ENCODE measurements at regions of chr5 and their contacts with region 1.

Region 1: DNA sequence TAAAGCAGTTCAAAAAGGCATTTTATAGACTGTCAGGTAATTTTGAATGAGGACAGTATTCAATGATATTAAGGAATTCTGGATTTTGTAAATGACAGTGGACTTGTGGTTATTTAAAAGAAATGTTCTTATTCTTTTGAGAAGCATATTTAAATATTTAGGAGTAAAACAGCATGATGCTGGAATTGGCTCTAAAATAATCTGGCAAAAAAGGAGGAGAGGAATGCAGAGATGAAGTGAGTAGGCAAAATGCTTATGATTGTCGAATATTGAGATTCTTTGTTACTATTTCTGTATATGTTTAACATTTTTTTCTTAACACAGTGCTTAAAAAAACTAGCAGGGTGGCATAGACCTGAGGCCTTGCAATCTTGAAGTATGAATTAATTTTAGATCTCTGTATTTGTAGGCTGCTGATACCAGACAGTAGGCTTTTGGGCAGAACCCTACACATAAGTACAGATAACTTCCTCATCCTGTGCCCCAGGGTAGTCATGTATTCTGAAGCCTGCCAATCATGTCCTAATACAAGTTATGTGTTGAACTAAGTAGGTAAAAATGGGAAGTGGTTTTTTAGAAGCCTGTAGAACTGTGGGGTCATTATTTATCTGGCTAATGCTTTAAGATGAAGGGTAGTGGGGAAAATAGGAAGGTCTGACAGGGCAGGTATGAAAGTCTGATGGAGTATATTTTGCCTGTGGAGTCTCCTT is 9.4 kb downstream of the CD180 start:
- DNase-seq: no peak
- H3K4me3 Mint-ChIP-seq: no peak overlapping the region
- H3K27ac Mint-ChIP-seq: peak overlapping the region; percentile 10
- H3K4me1 Mint-ChIP-seq: peaks cover 39% of the 10 kb centered on the region
- H3K27me3 Mint-ChIP-seq: no peaks in the 10 kb centered on the region

Region 2: GRCh38 chr5:67165526-67166459 is 21.4 kb before region 1 on chr5:
- intact Hi-C with region 1: loop called (anchors 2 kb)
- DNase-seq: peak; percentile 82
- H3K4me3 Mint-ChIP-seq: peak overlapping the region; percentile 84
- H3K27ac Mint-ChIP-seq: peak overlapping the region; percentile 93
- H3K4me1 Mint-ChIP-seq: peaks cover 49% of the 10 kb centered on the region
- H3K27me3 Mint-ChIP-seq: no peaks in the 10 kb centered on the region

Region 3: GRCh38 chr5:67202828-67203227 is 15.7 kb after region 1 on chr5:
- intact Hi-C with region 1: loop called (anchors 2 kb)
- DNase-seq: no peak
- H3K4me3 Mint-ChIP-seq: no peak overlapping the region
- H3K27ac Mint-ChIP-seq: peak overlapping the region; percentile 75
- H3K4me1 Mint-ChIP-seq: peaks cover 79% of the 10 kb centered on the region
- H3K27me3 Mint-ChIP-seq: no peaks in the 10 kb centered on the region

Region 4: DNA sequence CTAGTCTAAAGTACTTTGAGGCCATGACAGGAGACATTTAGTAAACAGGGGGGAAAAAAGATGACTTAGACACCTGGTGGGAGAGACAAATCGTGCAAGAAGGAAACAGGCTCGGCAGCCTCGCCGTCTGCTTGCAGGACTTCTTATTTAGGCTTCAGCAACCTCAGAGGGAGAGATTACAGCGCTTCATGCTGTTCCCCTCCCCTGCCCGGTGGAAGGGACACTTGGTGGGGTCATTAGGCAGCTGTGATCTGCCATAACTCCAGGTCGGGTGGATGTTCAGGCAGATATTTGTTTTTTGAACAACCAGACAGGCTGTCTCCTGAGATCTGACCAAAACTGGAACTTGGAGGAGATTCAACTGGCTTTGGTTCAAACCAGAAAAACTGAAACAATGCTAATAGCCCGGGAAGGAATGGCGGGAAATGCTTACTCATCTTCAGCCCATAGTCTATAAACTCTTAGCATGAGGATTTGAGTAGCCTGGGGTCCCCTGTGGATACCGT is 47.6 kb after region 1 on chr5:
- intact Hi-C with region 1: no loop called
- DNase-seq: no peak
- H3K4me3 Mint-ChIP-seq: no peak overlapping the region
- H3K27ac Mint-ChIP-seq: no peak overlapping the region
- H3K4me1 Mint-ChIP-seq: peaks cover 1% of the 10 kb centered on the region
- H3K27me3 Mint-ChIP-seq: peaks cover 13% of the 10 kb centered on the region